ENCODE measurements at regions of chr1 and their contacts with region 1.

Region 1: DNA sequence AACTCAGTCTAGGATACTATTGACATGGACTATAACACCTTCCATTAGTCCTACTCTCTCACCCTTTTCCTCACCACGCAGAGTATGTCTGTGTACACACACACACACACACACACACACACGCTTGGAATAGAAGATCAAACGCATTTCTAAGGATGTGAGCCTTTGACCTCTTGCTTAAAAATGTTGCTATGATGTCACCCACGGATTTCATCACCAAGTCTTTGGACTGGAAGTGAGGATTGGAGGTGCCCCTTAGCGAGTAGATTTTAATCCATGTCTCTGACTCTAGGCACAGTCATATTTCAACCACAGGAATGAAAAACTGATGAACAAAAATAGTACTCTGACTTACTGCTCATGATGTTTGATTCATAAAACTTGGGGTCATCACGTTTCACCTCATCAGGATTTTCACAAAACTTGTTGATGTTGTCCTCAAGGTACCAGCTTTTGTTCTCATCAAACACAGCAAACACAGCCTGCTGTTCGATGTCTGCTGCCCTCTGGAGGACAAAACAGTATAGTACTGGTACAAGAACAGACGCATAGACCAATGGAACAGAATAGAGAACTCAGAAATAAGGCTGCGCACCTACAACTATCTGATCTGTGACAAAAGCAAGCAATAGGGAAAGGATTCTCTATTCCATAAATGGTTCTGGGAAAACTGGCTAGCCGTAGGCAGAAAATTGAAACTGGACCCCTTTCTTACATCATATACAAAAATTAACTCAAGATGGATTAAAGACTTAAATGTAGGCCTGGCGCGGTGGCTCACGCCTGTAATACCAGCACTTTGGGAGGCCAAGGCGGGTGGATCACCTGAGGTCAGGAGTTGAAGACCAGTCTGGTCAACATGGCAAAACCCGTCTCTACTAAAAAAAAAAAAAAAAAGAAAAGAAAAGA is 39.9 kb downstream of the F5 start:
- DNase-seq: peak; percentile 55 to 85 (median 70)
- H3K4me3 ChIP-seq: no peak overlapping the region
- H3K27ac ChIP-seq: no peak overlapping the region
- H3K4me1 ChIP-seq: no peaks in the 10 kb centered on the region
- H3K27me3 ChIP-seq: no peaks in the 10 kb centered on the region
- CTCF ChIP-seq: peak; percentile 74 to 93 (median 84)
- POLR2A ChIP-seq: no peak

Region 2: DNA sequence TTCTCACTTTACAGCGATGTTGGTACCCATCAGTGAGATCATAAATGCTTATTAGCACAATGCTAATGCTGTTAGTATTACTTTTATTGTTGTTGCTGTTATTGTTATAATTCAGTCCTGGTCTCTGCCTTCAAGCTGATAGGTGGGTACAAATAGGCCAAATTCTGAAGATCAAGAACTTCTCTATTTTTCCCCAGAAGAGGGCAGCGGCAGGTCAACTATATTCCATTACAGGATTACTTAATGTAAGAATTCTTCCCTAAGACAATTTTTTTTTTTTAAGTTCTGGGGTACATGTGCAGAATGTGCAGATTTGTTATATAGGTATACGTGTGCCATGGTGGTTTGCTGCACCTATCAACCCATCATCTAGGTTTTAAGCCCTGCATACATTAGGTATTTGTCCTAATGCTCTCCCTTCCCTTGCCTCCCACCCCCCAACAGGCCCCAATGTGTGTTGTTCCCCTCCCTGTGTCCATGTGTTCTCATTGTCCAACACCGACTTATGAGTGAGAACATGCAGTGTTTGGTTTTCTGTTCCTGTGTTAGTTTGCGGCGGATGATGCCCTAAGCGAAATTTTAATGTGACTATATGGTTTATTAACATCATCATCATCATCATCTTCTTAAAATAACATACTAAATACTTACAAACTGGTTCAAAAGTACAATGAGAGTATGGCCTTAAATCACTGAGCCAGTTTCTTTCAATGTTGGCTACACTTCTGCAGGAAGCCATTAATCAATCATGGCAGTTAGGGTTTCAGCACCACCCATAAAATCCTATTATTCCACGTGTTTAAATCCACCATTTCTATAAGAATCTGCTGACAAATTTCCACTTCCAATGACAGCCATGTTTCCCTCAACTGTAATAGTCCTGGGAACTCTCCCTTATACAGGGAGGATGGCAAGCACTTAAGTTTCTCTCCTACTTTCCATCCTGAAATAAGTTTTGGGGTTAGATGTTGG is 79.8 kb before region 1 on chr1:
- intact Hi-C with region 1: loop called (anchors 5 kb)
- DNase-seq: peak in 3 of 7 donors; percentile 40 to 61 (median 58)
- H3K4me3 ChIP-seq: no peak overlapping the region
- H3K27ac ChIP-seq: no peak overlapping the region
- H3K4me1 ChIP-seq: no peaks in the 10 kb centered on the region
- H3K27me3 ChIP-seq: no peaks in the 10 kb centered on the region
- CTCF ChIP-seq: peak in 5 of 6 experiments; percentile 43 to 62 (median 52)
- POLR2A ChIP-seq: no peak

Region 3: GRCh38 chr1:169809370-169810095 is 263.2 kb after region 1 on chr1:
- intact Hi-C with region 1: loop called in 1 of 2 experiments (anchors 5 kb)
- DNase-seq: peak in 4 of 7 donors; percentile 17 to 34 (median 26)
- H3K4me3 ChIP-seq: no peak overlapping the region
- H3K27ac ChIP-seq: no peak overlapping the region
- H3K4me1 ChIP-seq: no peaks in the 10 kb centered on the region
- H3K27me3 ChIP-seq: no peaks in the 10 kb centered on the region
- CTCF ChIP-seq: peak; percentile 44 to 64 (median 53)
- POLR2A ChIP-seq: no peak